ENCODE measurements at regions of chr1 and their contacts with region 1.

Region 1: GRCh38 chr1:100866041-100866900 is 28.4 kb downstream of the EXTL2 start:
- DNase-seq: no peak
- H3K4me3 Mint-ChIP-seq: no peak overlapping the region
- H3K27ac Mint-ChIP-seq: no peak overlapping the region
- H3K4me1 Mint-ChIP-seq: no peaks in the 10 kb centered on the region
- H3K27me3 Mint-ChIP-seq: no peaks in the 10 kb centered on the region

Region 2: DNA sequence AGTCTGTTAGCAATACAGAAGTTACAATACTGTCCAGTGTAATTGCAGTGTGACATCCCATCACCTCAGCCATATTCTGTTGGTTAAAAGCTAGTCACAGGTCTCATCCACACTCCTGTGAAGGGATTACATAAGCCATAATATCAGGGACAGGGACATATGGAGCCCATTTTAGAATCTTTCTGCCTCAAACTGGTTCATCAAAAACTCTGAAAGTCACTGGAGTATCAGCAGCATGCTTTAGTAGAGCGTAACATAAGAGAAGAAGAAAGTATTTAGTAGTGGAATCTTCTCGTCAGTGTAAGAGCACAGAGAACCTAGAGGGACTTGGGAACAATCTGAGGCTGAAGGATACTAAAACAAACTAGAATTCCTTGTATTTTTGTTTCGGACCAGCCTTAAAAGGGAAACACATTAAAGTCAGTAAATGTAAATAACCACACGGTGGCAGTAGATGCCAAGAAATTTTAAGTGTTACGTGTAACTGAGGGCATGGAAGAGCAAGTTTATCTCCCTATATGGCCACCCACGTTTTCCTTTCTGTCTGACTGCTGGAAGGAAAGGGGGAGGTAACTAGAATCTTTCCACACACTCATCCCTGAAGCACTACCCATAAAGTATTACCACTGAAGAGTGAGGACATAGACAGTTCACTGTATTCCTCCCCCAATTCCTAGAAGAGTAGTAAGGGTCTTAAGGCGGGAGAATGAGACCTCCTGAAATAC is 1057.7 kb before region 1 on chr1:
- CTCF ChIA-PET with region 1: interaction called, 8 read pairs
- POLR2A ChIA-PET with region 1: no interaction called
- intact Hi-C with region 1: loop called (anchors 1 kb)
- DNase-seq: peak; percentile 22
- H3K4me3 Mint-ChIP-seq: peak overlapping the region; percentile 43
- H3K27ac Mint-ChIP-seq: no peak overlapping the region
- H3K4me1 Mint-ChIP-seq: peaks cover 14% of the 10 kb centered on the region
- H3K27me3 Mint-ChIP-seq: peaks cover 14% of the 10 kb centered on the region

Region 3: DNA sequence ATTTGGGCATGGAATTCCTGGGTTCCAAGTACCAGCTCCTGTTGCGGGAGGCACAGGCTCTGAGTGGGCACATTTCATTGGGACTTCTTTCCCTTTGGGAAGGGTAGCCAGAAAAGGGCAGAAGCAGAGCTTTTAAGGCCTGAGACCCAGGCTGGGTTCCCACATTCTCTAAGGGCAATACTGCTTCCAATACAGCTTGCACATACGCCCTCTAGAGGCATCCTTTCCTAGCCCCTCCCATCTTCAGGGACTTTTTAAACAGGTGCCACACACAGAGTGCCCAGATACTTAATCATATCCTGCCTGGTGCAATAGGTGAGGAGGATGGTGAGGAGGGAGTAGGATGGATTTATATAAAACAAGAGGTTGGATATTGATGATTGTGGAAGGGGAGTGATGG is 322.6 kb before region 1 on chr1:
- CTCF ChIA-PET with region 1: interaction called, 5 read pairs
- POLR2A ChIA-PET with region 1: no interaction called
- intact Hi-C with region 1: loop called (anchors 2 kb)
- DNase-seq: peak; percentile 63
- H3K4me3 Mint-ChIP-seq: no peak overlapping the region
- H3K27ac Mint-ChIP-seq: no peak overlapping the region
- H3K4me1 Mint-ChIP-seq: peaks cover 8% of the 10 kb centered on the region
- H3K27me3 Mint-ChIP-seq: peaks cover 20% of the 10 kb centered on the region

Region 4: GRCh38 chr1:100606438-100606837 is 259.8 kb before region 1 on chr1:
- CTCF ChIA-PET with region 1: interaction called, 10 read pairs
- POLR2A ChIA-PET with region 1: no interaction called
- intact Hi-C with region 1: loop called (anchors 1 kb)
- DNase-seq: peak; percentile 11
- H3K4me3 Mint-ChIP-seq: no peak overlapping the region
- H3K27ac Mint-ChIP-seq: no peak overlapping the region
- H3K4me1 Mint-ChIP-seq: no peaks in the 10 kb centered on the region
- H3K27me3 Mint-ChIP-seq: peaks cover 12% of the 10 kb centered on the region

Region 5: DNA sequence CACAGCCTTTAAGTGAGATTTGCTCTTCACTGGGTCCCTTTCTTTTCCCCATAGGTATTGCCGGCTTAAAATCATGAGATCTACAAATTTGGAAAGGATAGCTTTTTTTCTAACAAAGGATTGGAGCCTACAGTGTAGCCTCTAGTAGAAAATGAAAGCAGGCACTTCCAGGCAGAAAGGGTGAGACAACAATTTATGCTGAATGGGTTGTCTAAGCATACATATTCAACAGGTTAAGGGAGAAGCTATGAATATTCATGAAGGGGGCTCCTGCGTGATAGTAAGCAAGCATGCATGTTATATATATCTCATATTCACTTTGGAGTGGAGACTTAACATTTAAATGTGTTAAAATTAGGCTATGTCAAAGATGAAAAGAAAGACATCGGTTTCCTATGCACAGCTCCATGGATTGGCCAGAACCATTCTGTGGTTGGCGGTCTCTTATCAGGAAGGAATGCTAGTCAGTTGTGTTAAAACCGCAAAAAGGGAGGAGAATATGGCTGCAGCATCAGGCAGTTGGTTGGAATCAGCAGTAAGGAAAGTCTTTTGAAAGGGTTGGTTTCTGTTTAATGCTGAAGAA is 80.7 kb before region 1 on chr1:
- CTCF ChIA-PET with region 1: no interaction called
- POLR2A ChIA-PET with region 1: no interaction called
- intact Hi-C with region 1: no loop called
- DNase-seq: no peak
- H3K4me3 Mint-ChIP-seq: no peak overlapping the region
- H3K27ac Mint-ChIP-seq: no peak overlapping the region
- H3K4me1 Mint-ChIP-seq: no peaks in the 10 kb centered on the region
- H3K27me3 Mint-ChIP-seq: peaks cover 12% of the 10 kb centered on the region

Region 6: DNA sequence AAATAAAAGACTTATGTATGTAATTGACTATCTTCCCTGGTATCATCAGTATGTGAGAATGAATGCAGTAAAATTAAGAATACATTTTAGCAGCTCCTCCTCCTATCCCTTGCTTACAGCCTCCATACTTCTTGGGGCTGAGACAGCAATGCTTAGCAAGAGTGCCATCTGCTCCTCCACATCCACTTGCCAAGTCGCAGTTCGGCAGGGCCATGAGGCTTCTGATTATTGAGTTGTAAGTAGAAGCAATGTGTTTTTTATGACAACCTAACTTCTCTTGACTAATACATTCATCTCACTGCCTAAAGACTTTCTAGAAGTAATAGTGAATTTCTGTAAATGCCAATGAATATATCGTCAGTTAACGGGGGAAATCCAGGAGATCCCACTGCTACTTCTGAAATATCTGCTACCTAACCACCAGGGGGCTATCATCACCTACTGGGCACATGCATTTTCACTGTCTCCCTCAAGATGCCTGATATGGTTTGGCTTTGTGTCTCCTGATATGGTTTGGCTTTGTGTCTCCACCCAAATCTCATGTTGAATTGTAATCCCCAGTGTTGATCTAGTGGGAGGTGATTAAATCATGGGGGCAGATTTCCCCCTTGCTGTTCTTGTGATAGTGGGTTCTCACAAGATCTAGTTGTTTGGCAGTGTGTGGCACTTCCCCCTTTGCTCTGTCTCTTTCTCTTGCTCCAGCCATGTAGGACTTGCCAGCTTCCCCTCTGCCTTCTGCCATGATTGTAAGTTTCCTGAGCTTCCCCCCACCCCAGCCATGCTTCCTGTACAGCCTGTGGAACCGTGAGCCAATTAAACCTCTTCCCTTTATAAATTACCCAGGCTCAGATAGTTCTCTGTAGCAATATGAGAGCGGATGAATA is 31.3 kb before region 1 on chr1:
- CTCF ChIA-PET with region 1: interaction called, 6 read pairs
- POLR2A ChIA-PET with region 1: no interaction called
- intact Hi-C with region 1: loop called (anchors 2 kb)
- DNase-seq: no peak
- H3K4me3 Mint-ChIP-seq: no peak overlapping the region
- H3K27ac Mint-ChIP-seq: no peak overlapping the region
- H3K4me1 Mint-ChIP-seq: peaks cover 5% of the 10 kb centered on the region
- H3K27me3 Mint-ChIP-seq: no peaks in the 10 kb centered on the region

Region 7: GRCh38 chr1:100883963-100884362 is 17.7 kb after region 1 on chr1:
- CTCF ChIA-PET with region 1: interaction called, 20 read pairs
- POLR2A ChIA-PET with region 1: no interaction called
- intact Hi-C with region 1: no loop called
- DNase-seq: no peak
- H3K4me3 Mint-ChIP-seq: no peak overlapping the region
- H3K27ac Mint-ChIP-seq: no peak overlapping the region
- H3K4me1 Mint-ChIP-seq: peaks cover 1% of the 10 kb centered on the region
- H3K27me3 Mint-ChIP-seq: no peaks in the 10 kb centered on the region

Region 8: GRCh38 chr1:100941098-100941527 is 74.8 kb after region 1 on chr1:
- CTCF ChIA-PET with region 1: no interaction called
- POLR2A ChIA-PET with region 1: no interaction called
- intact Hi-C with region 1: no loop called
- DNase-seq: peak; percentile 67
- H3K4me3 Mint-ChIP-seq: peak overlapping the region; percentile 77
- H3K27ac Mint-ChIP-seq: peak overlapping the region; percentile 92
- H3K4me1 Mint-ChIP-seq: peaks cover 39% of the 10 kb centered on the region
- H3K27me3 Mint-ChIP-seq: peaks cover 3% of the 10 kb centered on the region